ENCODE measurements at regions of chr9 and their contacts with region 1.

Region 1: DNA sequence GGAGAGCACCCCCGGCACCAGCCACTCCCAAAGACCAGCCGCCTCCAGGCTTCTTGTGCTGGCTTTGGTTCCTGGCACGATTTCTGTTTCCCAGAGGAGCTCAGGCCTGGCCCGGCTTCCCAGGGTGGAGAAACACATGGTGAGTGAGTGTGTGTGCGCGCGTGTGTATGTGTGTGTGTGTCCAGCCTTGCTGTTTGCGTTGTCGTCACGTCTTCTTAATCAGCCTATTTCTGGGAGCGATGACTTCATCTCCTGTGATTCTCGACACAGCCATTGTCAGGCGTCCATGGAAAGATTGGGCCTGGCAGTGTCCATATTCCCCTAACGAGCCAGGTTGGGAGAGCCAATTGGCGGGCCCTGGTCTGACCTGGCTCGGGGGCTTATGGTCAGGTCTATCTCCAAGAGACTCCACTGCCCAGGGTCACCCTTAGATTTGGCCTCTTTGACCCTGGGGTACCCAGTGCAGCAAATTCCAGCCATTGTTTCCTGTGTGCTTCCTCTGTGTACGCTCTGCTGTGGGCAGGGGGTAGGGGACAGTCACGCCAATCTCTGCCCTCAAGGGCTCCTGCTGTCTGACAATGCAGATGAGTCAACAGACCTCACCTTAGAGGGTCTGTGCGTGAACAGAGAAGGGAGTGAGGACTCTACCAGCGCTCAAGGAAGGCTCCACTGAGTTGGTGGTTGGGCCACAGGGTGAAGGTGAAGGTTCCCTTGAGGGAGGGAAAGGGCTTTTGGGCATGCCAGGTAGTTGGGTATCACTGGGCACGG is 73.8 kb downstream of the DAB2IP start:
- DNase-seq: peak; percentile 98

Region 2: GRCh38 chr9:121692606-121693387 is 32.4 kb before region 1 on chr9:
- intact Hi-C with region 1: loop called in 1 of 2 experiments (anchors 5 kb)
- DNase-seq: no peak

Region 3: DNA sequence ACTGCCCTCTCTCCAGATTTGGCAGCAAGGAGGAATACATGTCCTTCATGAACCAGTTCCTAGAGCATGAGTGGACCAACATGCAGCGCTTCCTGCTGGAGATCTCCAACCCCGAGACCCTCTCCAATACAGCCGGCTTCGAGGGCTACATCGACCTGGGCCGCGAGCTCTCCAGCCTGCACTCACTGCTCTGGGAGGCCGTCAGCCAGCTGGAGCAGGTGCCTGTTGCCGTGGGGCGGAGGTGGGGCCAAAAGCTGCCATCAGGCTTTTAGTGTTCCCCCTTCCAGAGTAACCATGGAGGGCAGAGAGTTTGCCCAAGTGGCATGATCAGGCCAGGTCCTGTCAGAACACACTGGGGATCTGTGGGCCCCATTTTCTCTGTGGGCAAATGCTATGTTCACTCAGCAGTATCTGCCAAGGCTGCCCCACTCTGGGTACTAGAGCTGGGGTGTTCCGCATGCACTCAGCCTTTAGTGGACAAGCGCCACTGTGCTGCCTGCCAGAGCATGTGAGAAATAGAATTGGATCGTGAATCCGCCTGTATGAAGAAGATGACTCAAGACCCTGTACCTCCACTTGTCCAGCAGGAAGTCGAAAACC is 43.3 kb after region 1 on chr9:
- intact Hi-C with region 1: loop called in 1 of 2 experiments (anchors 1 kb)
- DNase-seq: peak; percentile 69

Measured in posterior vena cava (tissue), 2 donors.